BJ (cell line): ENCODE measurements at regions of chr6 and their contacts with region 1.

Region 1: GRCh38 chr6:122491919-122492555 is 20.4 kb upstream of the SERINC1 start:
- DNase-seq: no peak
- H3K4me3 ChIP-seq: no peak overlapping the region
- H3K27me3 ChIP-seq: no peaks in the 10 kb centered on the region
- CTCF ChIP-seq: peak; percentile 96

Region 2: GRCh38 chr6:122308074-122308473 is 184.0 kb before region 1 on chr6:
- CTCF ChIA-PET with region 1: no interaction called
- POLR2A ChIA-PET with region 1: no interaction called
- DNase-seq: no peak
- H3K4me3 ChIP-seq: no peak overlapping the region
- H3K27me3 ChIP-seq: no peaks in the 10 kb centered on the region
- CTCF ChIP-seq: no peak

Region 3: GRCh38 chr6:122511193-122511924 is 19.3 kb after region 1 on chr6:
- CTCF ChIA-PET with region 1: interaction called, 11 read pairs
- POLR2A ChIA-PET with region 1: no interaction called
- DNase-seq: no peak
- H3K4me3 ChIP-seq: no peak overlapping the region
- H3K27me3 ChIP-seq: no peaks in the 10 kb centered on the region
- CTCF ChIP-seq: no peak

Region 4: DNA sequence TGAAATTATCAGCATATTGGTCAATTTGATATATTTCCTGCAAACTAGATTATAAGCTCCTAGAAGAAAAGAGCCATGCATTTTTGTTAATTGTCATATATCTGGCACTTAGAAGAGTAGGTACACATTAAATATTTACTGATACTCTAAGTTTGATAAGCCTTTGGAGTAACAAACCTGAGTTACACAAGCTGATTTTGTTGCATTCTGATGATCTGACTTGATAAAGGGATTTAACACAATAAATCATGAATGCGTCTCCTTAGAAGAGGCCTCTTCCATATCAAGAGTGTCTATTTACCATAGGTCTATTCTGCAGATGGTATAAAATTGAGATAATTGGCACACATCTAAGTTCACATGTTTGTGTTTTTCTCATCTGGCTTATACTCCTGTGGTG is 28.1 kb after region 1 on chr6:
- CTCF ChIA-PET with region 1: interaction called, 13 read pairs
- POLR2A ChIA-PET with region 1: no interaction called
- DNase-seq: no peak
- H3K4me3 ChIP-seq: no peak overlapping the region
- H3K27me3 ChIP-seq: no peaks in the 10 kb centered on the region
- CTCF ChIP-seq: no peak